Right ventricle myocardium superior (tissue), 1 donor: ENCODE measurements at regions of chr11 and their contacts with region 1.

Region 1: GRCh38 chr11:3217676-3218482 is 734 bp downstream of the MRGPRG start:
- DNase-seq: peak; percentile 36
- ATAC-seq: peak; percentile 9

Region 2: DNA sequence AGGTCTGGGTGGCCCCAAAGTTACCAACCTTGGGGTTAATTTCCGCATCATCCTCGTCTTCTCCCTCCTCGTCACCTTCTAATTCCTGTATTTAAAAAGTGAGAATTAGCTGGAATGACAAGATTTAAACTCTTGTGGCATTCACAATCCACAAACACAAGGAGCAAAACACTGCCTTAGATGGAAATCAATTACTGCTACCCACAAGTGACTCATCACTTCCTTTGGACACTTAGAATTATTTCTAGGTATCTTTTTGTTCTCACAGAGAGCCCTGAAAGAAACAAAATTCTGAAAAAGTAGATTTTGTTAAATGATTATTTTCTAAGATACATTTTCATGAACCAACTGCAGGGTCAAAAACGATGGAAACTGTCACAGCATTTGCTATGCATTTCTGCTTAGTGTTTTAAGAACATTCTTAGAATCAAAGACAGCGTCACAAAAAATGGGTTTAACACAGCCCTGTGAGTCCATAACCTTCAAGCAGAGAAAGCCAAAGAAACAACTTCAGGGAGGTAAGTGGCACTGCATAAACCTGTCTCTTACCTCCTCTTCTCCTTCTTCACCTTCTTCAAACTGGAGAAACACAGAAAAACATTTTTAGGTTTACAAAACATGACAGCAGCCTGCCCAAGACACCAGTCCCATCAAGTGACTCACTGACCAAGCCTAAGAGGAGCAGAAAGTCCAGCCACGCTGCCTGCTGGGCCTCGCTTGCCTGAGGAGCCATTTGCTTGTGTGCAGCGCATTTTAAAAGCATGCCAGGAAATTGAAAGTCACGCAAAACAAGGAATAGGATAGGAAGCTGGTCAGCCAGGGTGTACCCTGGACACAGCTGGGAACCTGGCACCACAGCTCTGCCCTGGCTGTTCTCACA is 266.4 kb before region 1 on chr11:
- intact Hi-C with region 1: no loop called
- DNase-seq: no peak
- ATAC-seq: no peak

Region 3: DNA sequence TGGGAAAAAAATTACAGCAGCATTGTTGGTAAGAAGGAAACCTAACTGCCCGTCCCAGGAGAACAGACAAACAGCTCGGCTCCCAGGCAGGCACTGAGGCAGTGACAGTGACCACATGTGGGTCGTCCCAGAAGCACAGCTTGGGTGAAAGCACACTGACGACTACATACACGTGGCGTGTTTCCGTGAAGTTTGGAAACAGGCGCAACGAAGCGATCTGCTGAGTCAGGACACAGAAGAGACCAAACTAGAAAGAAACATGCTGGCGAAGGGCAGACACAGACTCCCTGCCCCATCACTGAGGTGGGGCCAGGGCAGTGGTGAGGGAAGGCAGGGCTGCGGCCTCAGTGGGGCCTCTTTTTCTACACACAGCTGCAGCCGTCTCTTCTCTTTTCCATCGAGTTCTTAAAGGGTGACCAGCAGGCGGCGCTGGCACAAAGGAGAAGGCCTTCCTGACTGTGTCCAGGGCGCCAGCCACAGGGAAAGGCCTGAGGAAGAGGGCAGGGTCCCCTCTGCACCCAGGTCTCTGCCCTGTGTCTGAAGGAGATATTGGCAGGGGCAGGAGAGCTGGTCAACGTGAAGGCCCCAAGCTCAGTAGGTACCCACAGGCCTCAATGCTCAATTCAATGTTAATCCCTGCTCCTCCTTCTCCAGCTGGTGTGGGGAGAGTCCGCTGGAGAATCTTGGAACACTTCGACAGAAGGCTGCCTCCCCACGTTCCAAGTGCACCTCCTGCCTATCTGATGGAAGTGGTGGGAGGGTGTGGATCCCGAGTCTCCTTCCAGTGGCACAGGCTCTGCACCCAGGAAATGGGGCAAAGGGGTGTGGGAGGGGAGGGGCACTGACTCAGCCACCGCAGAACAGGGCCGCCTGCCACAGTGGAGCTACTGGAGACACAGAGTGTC is 180.6 kb before region 1 on chr11:
- intact Hi-C with region 1: loop called (anchors 5 kb)
- DNase-seq: peak; percentile 92
- ATAC-seq: peak; percentile 85

Region 4: DNA sequence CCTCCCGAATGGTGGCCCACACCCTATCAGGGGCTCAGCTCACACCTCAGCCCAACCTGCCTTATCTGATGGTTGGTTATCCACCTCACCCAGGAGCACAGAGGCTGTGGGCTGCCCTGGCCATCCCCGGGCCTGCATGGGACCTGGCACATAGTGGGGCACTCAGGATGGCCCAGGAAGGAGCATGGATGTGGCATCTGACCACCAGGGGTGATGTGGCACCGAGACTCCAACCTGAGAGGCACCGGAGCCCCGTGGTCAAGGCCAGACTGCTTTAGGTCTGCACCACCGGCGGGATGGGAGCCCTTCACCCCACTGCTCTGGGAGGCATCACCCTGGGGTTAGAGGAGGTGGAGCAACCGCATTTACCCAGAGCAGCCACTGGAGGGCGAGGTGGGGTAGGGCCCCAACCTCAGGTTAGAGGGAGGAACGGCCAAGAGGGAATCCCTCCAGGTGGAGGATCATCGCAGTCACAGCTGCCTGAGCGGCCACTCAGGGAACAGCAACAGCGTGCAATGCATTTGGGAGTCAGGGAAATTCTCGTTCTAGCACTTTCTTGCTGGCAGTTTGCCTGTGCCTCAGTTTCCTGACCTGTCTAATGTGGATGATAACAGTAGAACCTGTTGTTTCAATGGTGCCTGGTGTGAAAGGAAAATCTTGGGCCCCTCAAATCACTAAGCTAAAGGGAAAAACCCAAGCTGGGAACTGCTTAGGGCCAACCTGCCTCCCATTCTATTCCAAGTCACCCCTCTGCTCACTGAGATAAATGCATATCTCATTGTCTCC is 107.8 kb before region 1 on chr11:
- intact Hi-C with region 1: loop called (anchors 5 kb)
- DNase-seq: peak; percentile 52
- ATAC-seq: peak; percentile 86

Region 5: DNA sequence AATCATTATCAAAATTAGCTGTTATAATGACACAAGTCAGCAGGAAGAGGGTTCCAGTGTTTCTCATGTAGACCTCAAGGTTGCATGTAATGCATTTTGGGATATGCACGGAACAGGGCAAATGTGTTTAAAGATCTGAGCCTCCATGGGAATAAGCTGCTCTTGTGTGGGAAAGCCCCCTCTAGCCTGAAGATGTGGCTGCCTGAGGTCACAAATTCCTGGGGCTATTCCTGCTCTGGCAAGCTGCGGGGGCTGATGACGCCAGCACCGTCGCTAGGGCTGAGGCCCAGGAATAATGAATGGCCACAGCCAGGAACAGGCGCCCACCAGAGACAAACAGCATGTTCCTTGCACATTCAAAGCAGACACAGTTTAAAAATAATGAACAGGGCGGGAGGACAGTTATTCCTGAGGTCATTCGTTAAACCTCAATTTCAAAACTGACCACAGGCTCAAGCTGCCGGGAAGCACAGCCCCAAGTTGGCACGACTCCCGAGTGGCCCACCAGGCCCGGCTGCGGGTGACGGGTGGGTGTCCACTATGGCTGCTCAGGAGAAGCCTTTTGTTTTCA is 64.5 kb before region 1 on chr11:
- intact Hi-C with region 1: no loop called
- DNase-seq: peak; percentile 81
- ATAC-seq: peak; percentile 71

Region 6: GRCh38 chr11:3245071-3245470 is 27.2 kb after region 1 on chr11:
- intact Hi-C with region 1: no loop called
- DNase-seq: no peak
- ATAC-seq: no peak